ENCODE measurements at regions of chr12 and their contacts with region 1.

Region 1: DNA sequence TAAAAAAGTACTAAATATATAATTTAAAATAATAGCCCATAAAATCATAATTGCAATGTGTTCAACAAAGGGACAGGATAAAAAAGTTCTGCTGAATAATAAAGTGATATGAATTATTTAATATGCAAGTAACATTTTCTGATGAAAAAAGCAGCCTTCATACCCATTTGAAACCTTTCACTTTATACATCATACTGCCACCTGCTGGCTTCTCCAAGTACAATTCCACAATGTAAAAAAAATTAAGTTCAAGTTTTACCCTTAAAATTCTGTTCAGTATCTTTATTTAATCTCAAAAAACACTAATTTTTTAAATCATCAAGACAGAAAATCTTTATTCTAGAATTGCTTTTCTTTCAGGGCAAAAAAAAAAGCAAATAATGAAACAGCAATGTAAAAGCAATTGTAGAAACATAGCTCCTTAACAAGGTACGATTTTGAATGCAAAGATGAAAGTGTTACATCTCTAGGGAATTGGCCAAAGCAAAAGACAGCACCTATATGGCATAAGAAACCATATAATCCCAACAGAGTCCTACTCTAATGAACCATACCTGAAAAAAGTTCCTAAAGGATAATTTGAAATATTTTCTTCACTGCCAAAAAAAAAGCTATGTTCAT is 15.0 kb downstream of the MDM1 start:
- DNase-seq: no peak
- ATAC-seq: no peak

Region 2: DNA sequence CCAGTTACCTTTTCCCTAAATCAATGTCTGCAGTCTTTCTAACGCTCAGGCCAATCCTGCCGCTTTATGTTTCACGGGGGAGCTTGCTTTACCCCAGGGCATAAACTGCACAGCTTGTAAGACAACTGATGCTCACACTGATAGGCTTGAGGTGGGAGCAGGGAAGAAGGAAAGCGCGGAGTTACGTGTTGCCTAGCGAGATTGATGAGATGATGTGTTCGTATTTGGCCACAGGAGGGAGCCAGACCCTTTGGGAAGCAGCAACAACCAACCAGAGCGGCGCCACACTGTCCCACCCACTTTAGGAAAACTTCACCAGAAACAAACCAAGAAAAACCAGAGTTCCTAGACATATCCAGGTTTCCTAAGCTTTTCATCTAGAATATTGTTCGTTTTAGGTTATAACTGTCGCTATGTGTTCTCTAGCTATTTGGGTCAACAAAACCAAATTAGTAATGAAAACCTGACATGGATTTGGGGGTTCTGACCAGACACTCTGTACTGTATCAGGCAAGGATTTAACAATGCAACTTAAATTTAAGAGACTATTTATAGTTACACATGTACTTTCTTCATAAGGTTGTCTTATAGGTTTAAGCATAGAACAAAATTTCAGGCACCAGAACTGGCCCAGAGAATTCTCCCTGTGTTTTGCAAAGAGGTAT is 93.9 kb before region 1 on chr12:
- intact Hi-C with region 1: loop called (anchors 2 kb)
- DNase-seq: peak; percentile 78
- ATAC-seq: peak; percentile 99

Region 3: DNA sequence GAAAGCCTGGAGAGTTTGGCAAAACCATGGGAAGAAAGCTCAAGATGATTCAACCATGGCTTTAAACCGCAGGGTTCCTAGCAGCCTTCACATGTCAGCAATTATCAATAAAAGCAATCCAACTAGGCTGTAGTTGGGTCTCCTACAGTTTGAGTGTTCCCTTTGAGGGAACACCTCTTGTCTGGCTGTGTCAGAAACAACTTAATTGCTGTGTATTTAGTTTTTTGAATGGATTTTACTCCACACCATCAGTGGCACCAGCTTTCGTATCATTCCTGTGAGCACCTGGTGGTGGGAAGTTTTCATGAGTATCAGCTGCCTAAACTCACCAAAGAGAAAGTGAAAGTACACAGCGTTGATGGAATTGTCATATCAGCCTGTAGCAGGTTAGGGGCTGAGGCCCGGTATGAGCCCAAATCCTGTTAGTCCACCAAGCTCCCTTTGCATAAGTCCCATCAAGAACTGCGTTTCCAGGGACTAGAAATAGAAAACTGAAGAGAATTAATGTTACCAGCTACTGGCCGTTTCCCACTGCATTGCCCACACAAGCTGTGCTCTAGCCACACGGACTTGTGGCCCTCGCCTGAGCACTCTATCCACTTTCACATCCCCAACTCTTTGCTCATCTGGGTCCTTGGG is 80.6 kb before region 1 on chr12:
- intact Hi-C with region 1: loop called (anchors 5 kb)
- DNase-seq: no peak
- ATAC-seq: peak; percentile 62

Region 4: DNA sequence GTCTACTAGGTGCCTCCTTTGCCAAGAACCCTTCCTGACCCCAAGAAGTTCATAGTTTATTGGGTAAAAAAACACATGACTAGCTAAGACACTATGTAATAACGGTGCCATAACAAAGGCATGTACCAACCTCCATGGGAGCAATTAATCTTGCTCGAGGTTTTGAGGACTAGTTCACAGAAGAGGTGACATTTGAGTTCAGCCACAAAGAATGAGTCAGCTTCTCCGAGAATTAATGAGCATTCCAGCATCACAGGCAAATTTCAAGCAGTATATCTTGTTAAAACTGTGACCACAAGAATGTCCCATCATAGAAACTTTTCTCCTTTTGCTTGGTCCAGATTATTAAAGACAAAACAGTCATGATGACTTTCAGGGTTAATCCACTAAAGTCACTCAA is 180.5 kb after region 1 on chr12:
- intact Hi-C with region 1: no loop called
- DNase-seq: no peak
- ATAC-seq: no peak

Measured in Right ventricle myocardium superior (tissue), 1 donor.